RWPE1 (cell line): ENCODE measurements at regions of chr1 and their contacts with region 1.

Region 1: GRCh38 chr1:103461161-103462105 is 64.1 kb upstream of the RNPC3 start:
- DNase-seq: peak; percentile 32
- H3K27ac ChIP-seq: no peak overlapping the region
- CTCF ChIP-seq: peak; percentile 68

Region 2: GRCh38 chr1:103106426-103107341 is 354.7 kb before region 1 on chr1:
- CTCF ChIA-PET with region 1: interaction called, 14 read pairs
- POLR2A ChIA-PET with region 1: no interaction called
- DNase-seq: peak; percentile 36
- H3K27ac ChIP-seq: no peak overlapping the region
- CTCF ChIP-seq: peak; percentile 60